HAP-1 (cell line): ENCODE measurements at regions of chr1 and their contacts with region 1.

Region 1: DNA sequence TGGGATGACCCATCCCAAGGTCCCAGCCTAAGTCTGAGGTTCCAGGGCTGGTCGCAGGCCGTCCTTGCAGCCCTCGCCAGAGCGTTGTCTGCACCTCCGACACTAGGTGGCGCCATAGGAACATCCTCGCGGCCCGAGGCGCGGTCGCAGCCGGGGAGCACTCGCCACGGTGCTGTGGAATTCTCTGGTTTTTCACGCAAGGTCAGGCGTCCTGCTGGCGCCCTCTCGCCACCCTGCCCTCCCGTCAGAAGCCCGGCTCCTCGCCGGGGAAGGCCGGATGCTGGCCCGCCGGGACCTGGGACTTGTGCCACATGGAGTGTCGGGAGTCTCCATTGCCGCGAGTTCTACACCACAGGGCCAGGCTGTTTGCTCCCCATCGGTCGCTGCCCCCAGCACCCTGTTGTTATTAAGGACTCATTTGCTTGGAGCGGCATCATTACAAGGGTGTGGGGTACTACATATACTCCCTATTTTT is 196.8 kb upstream of the LMO4 start:
- DNase-seq: peak; percentile 57 to 87
- H3K4me3 ChIP-seq: peak overlapping the region; percentile 23
- H3K4me1 ChIP-seq: no peaks in the 10 kb centered on the region
- H3K27me3 ChIP-seq: no peaks in the 10 kb centered on the region

Region 2: DNA sequence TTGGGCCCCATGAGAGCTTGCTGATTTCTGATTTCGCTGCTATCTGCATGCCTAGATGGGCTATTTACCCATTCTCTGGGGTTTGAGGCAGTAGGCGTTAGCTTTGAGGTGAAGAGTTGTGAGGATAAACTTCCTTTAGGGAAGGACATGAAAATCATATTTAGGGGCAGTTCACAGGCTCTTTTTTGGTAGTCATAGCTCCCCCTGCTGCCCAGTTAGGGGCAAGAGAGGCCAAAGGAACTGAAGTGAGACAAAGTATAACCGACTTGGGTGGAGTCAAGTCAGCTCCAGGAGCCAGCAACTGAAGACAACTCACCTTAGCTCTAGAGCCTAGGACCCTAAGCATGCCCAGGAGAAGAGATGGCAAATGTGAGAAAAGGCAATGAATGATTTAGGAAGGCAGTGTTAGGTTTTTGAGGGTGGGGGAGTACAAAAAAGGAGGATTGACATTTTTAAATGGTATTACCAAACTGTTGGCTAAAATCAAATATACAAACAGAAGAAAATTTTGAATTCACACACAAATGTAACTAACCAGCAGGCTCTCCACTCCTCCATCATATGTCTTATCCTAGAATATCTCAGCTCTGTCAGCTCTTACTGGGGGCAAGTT is 822.0 kb after region 1 on chr1:
- in situ Hi-C with region 1: loop called (anchors 10 kb)
- DNase-seq: peak; percentile 72 to 75
- H3K4me3 ChIP-seq: no peak overlapping the region
- H3K4me1 ChIP-seq: peaks cover 8% of the 10 kb centered on the region
- H3K27me3 ChIP-seq: no peaks in the 10 kb centered on the region